ENCODE measurements at regions of chr6 and their contacts with region 1.

Region 1: GRCh38 chr6:160733050-160733646 is 31.1 kb downstream of the PLG start:
- DNase-seq: no peak
- ATAC-seq: peak; percentile 62
- H3K4me3 ChIP-seq: no peak overlapping the region
- H3K27ac ChIP-seq: no peak overlapping the region
- H3K4me1 ChIP-seq: no peaks in the 10 kb centered on the region
- H3K27me3 ChIP-seq: no peaks in the 10 kb centered on the region

Region 2: GRCh38 chr6:160462551-160463109 is 270.5 kb before region 1 on chr6:
- intact Hi-C with region 1: no loop called
- DNase-seq: no peak
- ATAC-seq: no peak
- H3K4me3 ChIP-seq: no peak overlapping the region
- H3K27ac ChIP-seq: no peak overlapping the region
- H3K4me1 ChIP-seq: no peaks in the 10 kb centered on the region
- H3K27me3 ChIP-seq: no peaks in the 10 kb centered on the region

Region 3: GRCh38 chr6:160950507-160950906 is 217.4 kb after region 1 on chr6:
- intact Hi-C with region 1: no loop called
- DNase-seq: no peak
- ATAC-seq: peak; percentile 36
- H3K4me3 ChIP-seq: no peak overlapping the region
- H3K27ac ChIP-seq: peak overlapping the region in 1 of 2 donors; percentile 70
- H3K4me1 ChIP-seq: no peaks in the 10 kb centered on the region
- H3K27me3 ChIP-seq: no peaks in the 10 kb centered on the region

Region 4: DNA sequence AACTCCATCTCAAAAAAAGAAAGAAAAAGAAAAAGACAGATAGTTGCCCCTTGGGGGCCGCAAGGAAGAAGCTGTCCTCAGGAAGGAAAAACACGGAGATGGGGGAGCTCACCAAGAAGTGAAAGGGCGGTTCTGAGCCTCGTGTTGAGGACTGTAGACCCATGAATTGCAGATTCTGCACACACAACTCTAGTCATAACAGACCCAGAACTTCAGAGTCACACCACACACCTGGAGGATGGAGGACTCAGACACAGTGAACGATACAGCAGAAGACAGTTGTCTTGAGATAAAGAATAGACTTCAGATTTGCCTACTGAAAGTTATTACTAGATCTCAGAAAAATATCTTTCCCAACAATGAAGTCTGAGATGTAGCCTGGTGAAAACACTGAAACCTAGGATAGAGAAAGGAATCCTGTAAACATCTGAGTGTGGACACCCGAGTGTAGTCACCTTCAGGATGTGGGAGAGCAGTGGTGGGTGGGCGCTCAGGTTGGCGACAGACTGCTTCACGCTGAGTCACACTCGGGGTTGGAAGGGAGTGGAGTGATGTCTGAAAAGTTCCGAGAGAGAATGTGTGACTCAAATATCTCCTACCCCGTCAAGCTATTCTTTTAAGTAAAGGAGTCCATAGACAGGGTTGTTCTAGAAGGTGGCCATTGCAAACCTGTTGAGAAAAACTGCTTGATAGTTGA is 346.6 kb after region 1 on chr6:
- intact Hi-C with region 1: loop called in 1 of 2 experiments (anchors 5 kb)
- DNase-seq: no peak
- ATAC-seq: no peak
- H3K4me3 ChIP-seq: no peak overlapping the region
- H3K27ac ChIP-seq: no peak overlapping the region
- H3K4me1 ChIP-seq: no peaks in the 10 kb centered on the region
- H3K27me3 ChIP-seq: no peaks in the 10 kb centered on the region

Measured in aorta (tissue), 5 donors.